CD4-positive, alpha-beta T cell (primary cell): ENCODE measurements at regions of chr1 and their contacts with region 1.

Region 1: GRCh38 chr1:26035959-26036755 is 9.8 kb downstream of the SLC30A2 start:
- DNase-seq: peak; percentile 57 to 88 (median 72)
- ATAC-seq: peak; percentile 65
- H3K4me3 ChIP-seq: peak overlapping the region; percentile 99
- H3K4me3 Mint-ChIP-seq: peak overlapping the region; percentile 94
- H3K27ac ChIP-seq: peak overlapping the region; percentile 60 to 75
- H3K27ac Mint-ChIP-seq: peak overlapping the region; percentile 88
- H3K4me1 ChIP-seq: peaks cover 22% of the 10 kb centered on the region
- H3K4me1 Mint-ChIP-seq: peaks cover 17% of the 10 kb centered on the region
- H3K27me3 ChIP-seq: peaks cover 0 to 2% of the 10 kb centered on the region in 2 experiments
- H3K27me3 Mint-ChIP-seq: no peaks in the 10 kb centered on the region
- CTCF ChIP-seq: peak; percentile 100

Region 2: DNA sequence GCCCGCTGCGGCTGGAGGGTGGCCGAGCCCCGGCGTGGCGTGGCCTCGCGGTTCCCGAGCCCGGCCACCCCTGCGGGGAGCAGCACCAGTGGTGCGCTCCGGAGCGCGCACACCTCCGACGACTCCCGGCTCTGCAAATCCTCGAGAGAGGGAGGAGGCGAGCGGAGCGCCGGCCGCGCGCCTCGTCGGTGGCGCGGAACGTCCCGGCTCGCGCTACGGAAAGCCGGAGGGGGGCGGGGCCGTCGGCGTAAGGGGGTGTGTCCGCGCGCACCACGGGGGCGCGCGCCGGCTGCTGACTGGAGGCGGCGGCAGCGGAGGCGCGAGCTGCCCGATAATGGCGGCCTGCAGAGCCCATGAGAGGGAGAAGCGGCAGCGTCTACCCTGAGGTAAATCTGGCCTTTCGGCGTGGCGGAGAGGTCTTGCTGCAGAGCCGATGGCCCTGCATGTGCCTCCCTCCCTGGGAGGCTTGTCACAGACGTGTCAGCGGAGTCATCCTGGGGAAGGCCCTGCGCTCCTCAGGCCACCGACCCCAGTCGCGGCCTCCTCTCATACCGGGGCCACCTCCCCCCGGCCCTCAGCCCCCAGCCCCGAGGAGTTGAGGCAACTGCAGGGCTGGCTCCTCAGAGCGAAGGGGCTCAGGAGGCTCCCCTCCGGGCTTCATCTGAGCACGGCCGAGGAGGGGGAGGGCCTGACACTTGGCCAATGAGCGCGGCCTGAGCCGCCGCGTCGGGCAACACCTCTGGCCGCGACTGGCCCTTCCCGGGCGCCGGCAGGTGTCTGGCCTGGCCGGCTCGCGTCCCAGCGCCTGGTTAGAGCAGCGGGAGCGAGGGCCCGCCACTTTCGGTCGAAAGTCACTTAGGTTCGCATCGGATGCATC is 75.6 kb after region 1 on chr1 and contains the start of gene PDIK1L:
- CTCF ChIA-PET with region 1: no interaction called
- POLR2A ChIA-PET with region 1: no interaction called
- intact Hi-C with region 1: loop called in 1 of 2 experiments (anchors 5 kb)
- DNase-seq: peak; percentile 91 to 99 (median 95)
- ATAC-seq: peak; percentile 86
- H3K4me3 ChIP-seq: peak within 1 kb of the TSS; percentile 99
- H3K4me3 Mint-ChIP-seq: peak within 1 kb of the TSS; percentile 96
- H3K27ac ChIP-seq: peak within 1 kb of the TSS; percentile 34 to 73
- H3K27ac Mint-ChIP-seq: peak within 1 kb of the TSS; percentile 92
- H3K4me1 ChIP-seq: peaks cover 24% of the 10 kb centered on the region
- H3K4me1 Mint-ChIP-seq: peaks cover 38% of the 10 kb centered on the region
- H3K27me3 ChIP-seq: no peaks in the 10 kb centered on the region
- H3K27me3 Mint-ChIP-seq: no peaks in the 10 kb centered on the region
- CTCF ChIP-seq: no peak
- total RNA-seq, gene PDIK1L: 9.5 to 9.9 TPM

Region 3: DNA sequence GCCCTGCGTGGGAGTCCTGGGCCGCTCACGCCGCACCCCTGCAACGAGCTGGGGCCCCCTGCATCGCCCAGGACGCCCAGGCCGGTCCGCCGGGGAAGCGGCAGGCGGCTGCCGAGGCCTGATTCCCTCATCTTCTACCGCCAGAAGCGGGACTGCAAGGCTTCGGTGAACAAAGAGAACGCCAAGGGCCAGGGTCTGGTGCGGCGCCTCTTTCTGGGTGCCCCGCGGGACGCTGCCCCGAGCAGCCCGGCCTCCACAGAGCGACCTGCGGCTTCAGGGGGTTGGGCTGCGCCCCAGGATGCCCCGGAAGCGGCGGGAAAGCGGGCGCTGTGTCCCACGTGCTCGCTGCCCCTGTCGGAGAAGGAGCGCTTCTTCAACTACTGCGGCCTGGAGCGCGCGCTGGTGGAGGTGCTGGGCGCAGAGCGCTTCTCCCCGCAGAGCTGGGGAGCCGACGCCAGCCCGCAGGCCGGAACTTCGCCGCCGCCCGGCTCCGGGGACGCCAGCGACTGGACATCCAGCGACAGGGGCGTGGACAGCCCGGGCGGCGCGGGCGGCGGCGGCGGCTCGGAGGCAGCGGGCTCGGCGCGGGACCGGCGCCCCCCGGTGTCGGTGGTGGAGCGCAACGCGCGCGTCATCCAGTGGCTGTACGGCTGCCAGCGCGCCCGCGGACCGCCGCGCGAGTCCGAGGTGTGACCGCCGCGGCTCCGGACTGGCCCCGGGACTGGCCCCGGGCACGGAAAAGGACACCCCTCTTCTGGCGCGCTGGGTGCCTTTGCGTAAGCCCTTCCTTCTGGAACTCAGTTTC is 125.5 kb after region 1 on chr1:
- CTCF ChIA-PET with region 1: no interaction called
- POLR2A ChIA-PET with region 1: no interaction called
- intact Hi-C with region 1: loop called in 1 of 2 experiments (anchors 1 kb)
- DNase-seq: peak in 10 of 14 experiments; percentile 16 to 65 (median 32)
- ATAC-seq: peak; percentile 63
- H3K4me3 ChIP-seq: peak overlapping the region; percentile 12
- H3K4me3 Mint-ChIP-seq: peak overlapping the region; percentile 58
- H3K27ac ChIP-seq: no peak overlapping the region
- H3K27ac Mint-ChIP-seq: no peak overlapping the region
- H3K4me1 ChIP-seq: peaks cover 29% of the 10 kb centered on the region
- H3K4me1 Mint-ChIP-seq: peaks cover 5% of the 10 kb centered on the region
- H3K27me3 ChIP-seq: peaks cover 26 to 44% of the 10 kb centered on the region in 2 experiments
- H3K27me3 Mint-ChIP-seq: peaks cover 39% of the 10 kb centered on the region
- CTCF ChIP-seq: no peak

Region 4: GRCh38 chr1:26627954-26628353 is 591.8 kb after region 1 on chr1:
- CTCF ChIA-PET with region 1: no interaction called
- POLR2A ChIA-PET with region 1: no interaction called
- intact Hi-C with region 1: no loop called
- DNase-seq: peak in 1 of 14 experiments; percentile 17
- ATAC-seq: no peak
- H3K4me3 ChIP-seq: no peak overlapping the region
- H3K4me3 Mint-ChIP-seq: no peak overlapping the region
- H3K27ac ChIP-seq: no peak overlapping the region
- H3K27ac Mint-ChIP-seq: no peak overlapping the region
- H3K4me1 ChIP-seq: no peaks in the 10 kb centered on the region
- H3K4me1 Mint-ChIP-seq: no peaks in the 10 kb centered on the region
- H3K27me3 ChIP-seq: no peaks in the 10 kb centered on the region
- H3K27me3 Mint-ChIP-seq: no peaks in the 10 kb centered on the region
- CTCF ChIP-seq: no peak